ENCODE measurements at regions of chr2 and their contacts with region 1.

Region 1: GRCh38 chr2:177263451-177264208 is 897 bp downstream of the NFE2L2 start:
- DNase-seq: peak; percentile 99
- H3K4me3 ChIP-seq: peak overlapping the region; percentile 62 to 95 (median 84)
- H3K27ac ChIP-seq: peak overlapping the region; percentile 96 to 100 (median 100)
- H3K4me1 ChIP-seq: peaks cover 31 to 64% (median 54%) of the 10 kb centered on the region in 6 donors
- H3K27me3 ChIP-seq: no peaks in the 10 kb centered on the region
- CTCF ChIP-seq: peak; percentile 87 to 96 (median 95)
- POLR2A ChIP-seq: peak in 2 of 3 donors; percentile 31 to 64

Region 2: GRCh38 chr2:176813621-176814049 is 450.0 kb before region 1 on chr2:
- intact Hi-C with region 1: no loop called
- DNase-seq: no peak
- H3K4me3 ChIP-seq: no peak overlapping the region
- H3K27ac ChIP-seq: peak overlapping the region in 3 of 8 donors; percentile 11 to 48 (median 13)
- H3K4me1 ChIP-seq: peaks cover 0 to 24% (median 9%) of the 10 kb centered on the region in 6 donors
- H3K27me3 ChIP-seq: no peaks in the 10 kb centered on the region
- CTCF ChIP-seq: no peak
- POLR2A ChIP-seq: no peak

Region 3: GRCh38 chr2:177164584-177165052 is 99.0 kb before region 1 on chr2:
- intact Hi-C with region 1: loop called (anchors 10 kb)
- DNase-seq: peak; percentile 90
- H3K4me3 ChIP-seq: peak overlapping the region; percentile 2 to 56 (median 28)
- H3K27ac ChIP-seq: peak overlapping the region; percentile 65 to 88 (median 86)
- H3K4me1 ChIP-seq: peaks cover 14 to 36% (median 26%) of the 10 kb centered on the region in 6 donors
- H3K27me3 ChIP-seq: no peaks in the 10 kb centered on the region
- CTCF ChIP-seq: peak; percentile 90 to 100 (median 97)
- POLR2A ChIP-seq: no peak

Region 4: GRCh38 chr2:177212106-177212890 is 51.3 kb before region 1 on chr2 and contains the start of gene HNRNPA3:
- intact Hi-C with region 1: loop called (anchors 5 kb)
- DNase-seq: peak; percentile 100
- H3K4me3 ChIP-seq: peak within 1 kb of the TSS; percentile 59 to 90 (median 68)
- H3K27ac ChIP-seq: peak within 1 kb of the TSS; percentile 98 to 100 (median 99)
- H3K4me1 ChIP-seq: peaks cover 28 to 57% (median 49%) of the 10 kb centered on the region in 6 donors
- H3K27me3 ChIP-seq: no peaks in the 10 kb centered on the region
- CTCF ChIP-seq: peak in 5 of 11 experiments; percentile 15 to 47 (median 27)
- POLR2A ChIP-seq: peak; percentile 8 to 94 (median 55)
- total RNA-seq, gene HNRNPA3: 79.8 to 213 (median 157) TPM

Region 5: GRCh38 chr2:178205853-178206521 is 942.4 kb after region 1 on chr2:
- intact Hi-C with region 1: no loop called
- DNase-seq: no peak
- H3K4me3 ChIP-seq: no peak overlapping the region
- H3K27ac ChIP-seq: no peak overlapping the region
- H3K4me1 ChIP-seq: no peaks in the 10 kb centered on the region
- H3K27me3 ChIP-seq: peaks cover 0 to 15% (median 0%) of the 10 kb centered on the region in 7 donors
- CTCF ChIP-seq: no peak
- POLR2A ChIP-seq: no peak